ENCODE measurements at regions of chr13 and their contacts with region 1.

Region 1: GRCh38 chr13:51614350-51614786 is 30.1 kb downstream of the WDFY2 start:
- DNase-seq: peak; percentile 66
- H3K4me3 Mint-ChIP-seq: peak overlapping the region; percentile 75
- H3K27ac Mint-ChIP-seq: peak overlapping the region; percentile 93
- H3K4me1 Mint-ChIP-seq: peaks cover 22% of the 10 kb centered on the region
- H3K27me3 Mint-ChIP-seq: no peaks in the 10 kb centered on the region

Region 2: GRCh38 chr13:51502153-51502651 is 112.2 kb before region 1 on chr13:
- CTCF ChIA-PET with region 1: no interaction called
- POLR2A ChIA-PET with region 1: no interaction called
- intact Hi-C with region 1: loop called (anchors 5 kb)
- DNase-seq: peak; percentile 63
- H3K4me3 Mint-ChIP-seq: no peak overlapping the region
- H3K27ac Mint-ChIP-seq: no peak overlapping the region
- H3K4me1 Mint-ChIP-seq: peaks cover 31% of the 10 kb centered on the region
- H3K27me3 Mint-ChIP-seq: peaks cover 11% of the 10 kb centered on the region

Region 3: GRCh38 chr13:51645154-51645650 is 30.8 kb after region 1 on chr13:
- CTCF ChIA-PET with region 1: interaction called, 3 read pairs
- POLR2A ChIA-PET with region 1: interaction called, 10 read pairs
- intact Hi-C with region 1: loop called (anchors 1 kb)
- DNase-seq: peak; percentile 32
- H3K4me3 Mint-ChIP-seq: peak overlapping the region; percentile 38
- H3K27ac Mint-ChIP-seq: peak overlapping the region; percentile 68
- H3K4me1 Mint-ChIP-seq: peaks cover 46% of the 10 kb centered on the region
- H3K27me3 Mint-ChIP-seq: no peaks in the 10 kb centered on the region

Region 4: DNA sequence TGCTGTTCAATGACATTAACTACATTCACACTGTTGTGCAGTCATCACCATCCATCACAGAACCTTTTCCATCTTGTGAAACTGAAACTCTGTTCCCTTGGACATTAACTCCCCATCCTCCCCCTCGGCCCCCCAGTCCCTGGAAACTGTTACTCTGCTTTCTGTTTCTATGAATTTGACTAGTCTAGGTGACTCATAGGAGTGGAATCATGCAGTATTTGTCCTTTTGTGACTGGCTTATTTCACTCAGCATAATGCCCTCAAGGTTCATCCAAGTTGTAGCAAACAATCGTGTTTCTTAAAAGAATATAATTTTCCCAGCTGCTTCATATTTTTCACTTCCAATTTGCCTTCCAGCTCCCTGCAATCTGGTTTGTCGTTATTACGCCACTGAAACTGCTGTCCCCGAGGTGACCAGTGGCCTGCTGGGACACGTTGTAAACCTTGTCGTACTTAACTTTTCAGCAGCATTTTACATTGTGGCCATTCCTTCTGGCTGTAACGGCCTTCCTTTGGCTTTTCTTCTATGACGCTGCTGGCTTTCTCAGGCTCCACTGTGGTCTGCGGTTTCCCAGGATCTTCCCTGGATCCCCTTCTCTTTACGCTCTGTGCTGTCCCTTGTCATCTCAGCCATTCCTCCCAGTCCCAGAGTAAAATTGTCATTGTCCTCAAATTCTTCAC is 115.6 kb after region 1 on chr13:
- CTCF ChIA-PET with region 1: no interaction called
- POLR2A ChIA-PET with region 1: no interaction called
- intact Hi-C with region 1: loop called (anchors 5 kb)
- DNase-seq: peak; percentile 74
- H3K4me3 Mint-ChIP-seq: no peak overlapping the region
- H3K27ac Mint-ChIP-seq: no peak overlapping the region
- H3K4me1 Mint-ChIP-seq: peaks cover 3% of the 10 kb centered on the region
- H3K27me3 Mint-ChIP-seq: no peaks in the 10 kb centered on the region

Region 5: DNA sequence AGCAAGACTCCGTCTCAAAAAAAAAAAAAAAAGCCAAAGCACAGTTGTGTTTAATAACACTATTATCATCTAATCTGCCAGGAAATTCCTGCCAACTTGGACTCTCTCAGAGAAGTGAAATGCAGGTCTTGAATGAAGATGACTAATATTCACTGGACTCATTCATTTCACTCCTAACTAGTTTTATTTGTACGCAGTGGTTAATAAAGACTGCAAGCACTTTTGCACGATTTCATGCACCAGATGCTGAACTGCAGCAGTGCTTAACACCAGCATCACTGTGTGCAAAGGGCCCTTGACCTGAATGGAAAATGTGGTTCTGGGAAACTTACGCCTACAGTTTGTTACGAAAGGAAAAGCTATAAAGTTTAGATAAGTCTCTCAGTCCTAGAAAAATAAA is 126.3 kb after region 1 on chr13:
- CTCF ChIA-PET with region 1: no interaction called
- POLR2A ChIA-PET with region 1: no interaction called
- intact Hi-C with region 1: no loop called
- DNase-seq: no peak
- H3K4me3 Mint-ChIP-seq: no peak overlapping the region
- H3K27ac Mint-ChIP-seq: no peak overlapping the region
- H3K4me1 Mint-ChIP-seq: peaks cover 16% of the 10 kb centered on the region
- H3K27me3 Mint-ChIP-seq: no peaks in the 10 kb centered on the region

Region 6: DNA sequence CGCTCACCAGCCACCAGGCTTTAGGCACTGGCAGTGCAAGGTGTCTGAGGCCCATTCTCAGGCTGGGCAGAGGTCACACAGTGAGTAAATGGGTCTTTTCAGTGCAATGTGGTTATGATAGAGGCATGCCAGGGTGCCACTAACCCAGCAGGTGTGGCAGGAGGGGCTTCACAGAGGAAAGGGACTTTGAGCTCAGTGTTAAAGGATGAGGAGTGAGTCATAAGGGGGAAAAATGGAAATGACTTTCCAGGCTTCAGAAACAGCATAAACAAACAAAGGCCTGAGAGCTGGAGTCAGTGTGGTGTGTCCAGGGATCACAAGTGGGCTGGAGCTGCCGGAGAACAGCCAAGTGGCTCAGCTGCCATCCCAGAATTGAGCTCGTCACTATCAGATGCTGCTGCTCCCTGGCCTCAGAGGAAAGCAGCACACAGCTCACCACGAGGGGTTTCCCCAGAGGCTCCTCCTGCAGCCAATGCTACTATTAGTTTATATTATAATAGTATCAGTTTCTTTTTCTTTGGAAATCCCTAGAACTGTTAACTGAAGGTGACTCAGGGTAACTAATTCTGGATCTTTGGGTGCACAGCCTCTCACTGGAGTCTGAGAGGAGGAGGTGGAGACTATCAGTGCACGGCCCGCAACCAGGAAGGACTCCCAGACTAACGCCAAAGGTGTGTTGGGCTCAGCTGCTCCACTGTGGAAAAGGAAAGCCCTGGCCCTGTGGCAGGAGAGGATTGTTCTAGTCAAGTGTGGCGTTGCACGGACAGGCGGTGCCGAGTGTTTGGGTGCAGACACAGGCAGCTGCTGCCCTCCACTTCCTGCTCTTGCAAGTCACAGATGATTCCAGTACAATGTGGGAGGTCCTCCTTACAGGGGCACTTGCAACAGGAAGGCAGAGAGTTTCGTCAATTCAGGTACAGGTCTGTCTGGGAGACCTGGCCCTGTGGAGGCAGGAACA is 150.1 kb after region 1 on chr13:
- CTCF ChIA-PET with region 1: no interaction called
- POLR2A ChIA-PET with region 1: interaction called, 3 read pairs
- intact Hi-C with region 1: loop called (anchors 10 kb)
- DNase-seq: peak; percentile 81
- H3K4me3 Mint-ChIP-seq: peak overlapping the region; percentile 77
- H3K27ac Mint-ChIP-seq: peak overlapping the region; percentile 95
- H3K4me1 Mint-ChIP-seq: peaks cover 42% of the 10 kb centered on the region
- H3K27me3 Mint-ChIP-seq: no peaks in the 10 kb centered on the region